ENCODE measurements at regions of chr12 and their contacts with region 1.

Region 1: DNA sequence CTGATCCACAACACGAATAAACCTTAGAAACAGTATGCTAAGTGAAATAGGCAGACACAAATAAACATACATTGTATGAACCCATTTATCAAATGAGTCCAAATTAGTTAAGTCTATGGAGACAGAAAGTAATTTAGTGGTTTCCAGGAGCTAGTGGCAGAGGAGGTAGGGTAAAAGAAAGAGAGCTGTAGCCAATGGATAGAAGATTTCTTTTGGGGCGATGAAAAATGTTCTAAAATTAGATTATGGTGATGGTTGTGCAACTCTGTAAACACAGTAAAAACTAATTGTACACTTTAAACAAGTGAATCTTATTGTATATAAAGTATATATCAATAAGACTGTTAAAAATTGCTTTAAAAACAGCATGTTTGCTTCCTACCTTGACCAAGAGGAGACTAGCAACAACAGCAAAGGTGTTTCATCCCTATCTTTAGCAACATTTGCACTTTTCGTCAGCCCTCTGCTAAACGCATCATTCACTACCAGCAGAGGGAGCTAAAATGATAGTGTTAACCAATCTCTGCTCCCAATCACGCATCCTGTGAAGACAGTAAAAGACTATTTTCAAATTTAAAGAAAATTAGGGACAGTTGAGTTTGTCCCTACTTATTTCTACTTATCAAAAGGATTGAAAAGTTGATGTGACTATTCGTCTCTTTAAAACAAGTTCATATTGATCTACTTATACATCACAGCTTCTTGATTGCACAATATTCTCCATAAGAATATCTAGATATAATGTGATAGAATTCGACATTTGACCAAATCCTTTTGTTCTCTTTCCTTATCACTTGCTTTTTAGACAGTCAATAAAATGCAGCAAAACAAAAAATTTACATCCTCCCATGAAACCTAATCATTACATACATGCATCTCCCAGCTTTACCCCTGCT is 24.0 kb upstream of the LGR5 start:
- DNase-seq: peak; percentile 60
- ATAC-seq: peak; percentile 90
- H3K4me3 ChIP-seq: no peak overlapping the region
- H3K27ac ChIP-seq: no peak overlapping the region
- H3K4me1 ChIP-seq: no peaks in the 10 kb centered on the region
- H3K27me3 ChIP-seq: no peaks in the 10 kb centered on the region
- CTCF ChIP-seq: peak; percentile 87
- EP300 ChIP-seq: no peak
- POLR2A ChIP-seq: no peak
- RAD21 ChIP-seq: peak; percentile 68

Region 2: DNA sequence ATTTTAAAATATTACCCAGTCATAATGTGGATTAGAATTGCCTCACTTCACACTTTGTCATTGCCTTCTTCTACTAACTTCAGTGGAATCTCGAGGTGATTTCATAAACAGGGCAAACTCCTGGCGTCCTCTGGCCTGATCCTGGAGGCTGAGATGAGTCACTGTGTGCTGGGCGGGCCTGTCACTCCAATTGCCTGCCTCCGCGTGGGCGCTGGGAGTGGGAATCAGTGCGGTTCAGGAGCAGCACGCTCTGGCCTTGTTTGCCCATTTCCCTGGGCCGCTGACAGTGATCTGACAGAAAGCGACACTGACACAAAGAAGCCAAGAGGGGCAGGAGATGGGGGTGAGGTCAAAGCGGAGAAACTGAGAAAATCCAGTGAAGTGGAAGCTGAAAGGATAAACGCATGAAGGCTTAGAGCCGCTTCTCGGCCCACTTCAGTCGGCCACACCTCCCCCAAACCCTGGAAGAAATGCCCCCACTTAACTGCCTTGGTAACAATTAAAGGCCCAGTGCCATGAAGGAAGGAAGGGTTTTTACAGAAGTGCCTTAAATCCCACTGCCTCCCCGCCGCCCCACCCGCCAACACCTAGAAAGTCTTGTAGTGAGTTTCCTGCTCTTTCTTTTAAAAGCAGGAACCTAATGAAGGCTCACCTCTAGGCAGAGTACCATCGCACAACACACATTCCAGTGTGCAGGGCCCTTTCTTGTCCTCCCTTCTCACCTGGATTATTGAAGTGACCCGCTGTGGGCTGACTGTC is 53.9 kb after region 1 on chr12:
- CTCF ChIA-PET with region 1: no interaction called
- POLR2A ChIA-PET with region 1: no interaction called
- in situ Hi-C with region 1: no loop called
- intact Hi-C with region 1: no loop called
- DNase-seq: peak; percentile 55
- ATAC-seq: peak; percentile 76
- H3K4me3 ChIP-seq: no peak overlapping the region
- H3K27ac ChIP-seq: no peak overlapping the region
- H3K4me1 ChIP-seq: peaks cover 49% of the 10 kb centered on the region
- H3K27me3 ChIP-seq: no peaks in the 10 kb centered on the region
- CTCF ChIP-seq: no peak
- EP300 ChIP-seq: no peak
- POLR2A ChIP-seq: no peak
- RAD21 ChIP-seq: no peak

Region 3: DNA sequence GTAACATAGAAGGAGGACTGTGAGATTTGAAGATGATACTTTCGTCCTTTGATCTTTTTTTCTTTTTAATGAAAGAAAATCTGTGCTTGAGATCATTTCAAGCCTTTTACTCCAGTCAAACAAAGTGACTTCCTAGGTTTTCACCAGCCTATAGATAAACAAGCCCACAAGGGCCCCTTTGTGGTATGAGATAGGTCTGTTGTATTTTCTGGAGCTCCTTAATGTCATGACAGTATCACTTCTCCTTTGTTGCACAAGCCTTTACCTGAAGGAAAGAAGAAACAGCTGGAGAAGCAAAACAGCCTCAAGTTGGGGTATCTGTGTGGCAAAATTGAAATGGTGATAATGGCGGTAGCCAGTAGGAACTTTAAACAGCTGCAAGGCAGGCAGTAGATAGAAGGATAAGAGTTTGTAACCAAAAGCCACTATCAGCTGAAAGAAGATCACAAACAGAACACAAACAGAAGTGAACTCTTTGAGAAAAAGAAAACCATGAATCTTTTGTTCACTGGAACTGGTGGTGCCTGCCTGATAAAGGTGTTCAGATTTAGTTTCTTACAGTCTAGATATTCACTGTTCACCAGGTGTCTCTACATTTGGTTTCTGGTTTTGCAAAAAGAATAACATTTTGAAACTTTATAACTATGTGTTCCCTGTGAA is 120.8 kb after region 1 on chr12:
- CTCF ChIA-PET with region 1: no interaction called
- POLR2A ChIA-PET with region 1: no interaction called
- in situ Hi-C with region 1: no loop called
- intact Hi-C with region 1: loop called (anchors 5 kb)
- DNase-seq: peak; percentile 76
- ATAC-seq: peak; percentile 71
- H3K4me3 ChIP-seq: peak overlapping the region in 1 of 3 experiments; percentile 7; a peak in 1 of 6 replicates
- H3K27ac ChIP-seq: peak overlapping the region; percentile 74
- H3K4me1 ChIP-seq: peaks cover 50% of the 10 kb centered on the region
- H3K27me3 ChIP-seq: no peaks in the 10 kb centered on the region
- CTCF ChIP-seq: no peak
- EP300 ChIP-seq: peak in 1 of 2 experiments; percentile 43; a peak in 2 of 4 replicates
- POLR2A ChIP-seq: no peak
- RAD21 ChIP-seq: no peak

Region 4: DNA sequence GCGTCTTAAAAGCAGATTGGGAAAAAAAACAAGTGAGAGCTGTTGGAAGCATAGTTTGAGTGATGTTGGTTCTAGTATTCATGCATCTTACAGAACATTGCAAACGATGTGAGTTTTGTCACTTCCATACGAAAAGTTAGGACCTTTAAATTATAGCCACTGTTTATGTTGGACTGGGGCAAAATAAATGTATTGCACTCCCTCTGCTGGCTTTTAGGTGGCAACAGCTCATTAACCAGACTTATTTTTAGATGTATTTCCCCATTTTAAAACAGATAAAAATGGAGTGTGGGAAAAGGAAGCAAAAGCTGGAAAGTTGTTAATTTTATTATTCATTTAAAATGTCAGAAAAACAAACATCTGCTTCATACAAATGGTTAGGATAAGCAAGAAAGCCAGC is 135.9 kb after region 1 on chr12:
- CTCF ChIA-PET with region 1: interaction called, 8 read pairs
- POLR2A ChIA-PET with region 1: no interaction called
- in situ Hi-C with region 1: no loop called
- intact Hi-C with region 1: loop called (anchors 5 kb)
- DNase-seq: no peak
- ATAC-seq: no peak
- H3K4me3 ChIP-seq: no peak overlapping the region
- H3K27ac ChIP-seq: no peak overlapping the region
- H3K4me1 ChIP-seq: peaks cover 48% of the 10 kb centered on the region
- H3K27me3 ChIP-seq: no peaks in the 10 kb centered on the region
- CTCF ChIP-seq: peak; percentile 34
- EP300 ChIP-seq: no peak
- POLR2A ChIP-seq: no peak
- RAD21 ChIP-seq: no peak

Region 5: GRCh38 chr12:71636704-71637115 is 221.1 kb after region 1 on chr12:
- CTCF ChIA-PET with region 1: interaction called, 3 read pairs
- POLR2A ChIA-PET with region 1: no interaction called
- in situ Hi-C with region 1: no loop called
- intact Hi-C with region 1: loop called (anchors 1 kb)
- DNase-seq: peak; percentile 70
- ATAC-seq: peak; percentile 51
- H3K4me3 ChIP-seq: no peak overlapping the region
- H3K27ac ChIP-seq: no peak overlapping the region
- H3K4me1 ChIP-seq: no peaks in the 10 kb centered on the region
- H3K27me3 ChIP-seq: no peaks in the 10 kb centered on the region
- CTCF ChIP-seq: peak; percentile 70
- EP300 ChIP-seq: no peak
- POLR2A ChIP-seq: no peak
- RAD21 ChIP-seq: peak; percentile 29; the same call in 1 of the 2 replicates

Region 6: DNA sequence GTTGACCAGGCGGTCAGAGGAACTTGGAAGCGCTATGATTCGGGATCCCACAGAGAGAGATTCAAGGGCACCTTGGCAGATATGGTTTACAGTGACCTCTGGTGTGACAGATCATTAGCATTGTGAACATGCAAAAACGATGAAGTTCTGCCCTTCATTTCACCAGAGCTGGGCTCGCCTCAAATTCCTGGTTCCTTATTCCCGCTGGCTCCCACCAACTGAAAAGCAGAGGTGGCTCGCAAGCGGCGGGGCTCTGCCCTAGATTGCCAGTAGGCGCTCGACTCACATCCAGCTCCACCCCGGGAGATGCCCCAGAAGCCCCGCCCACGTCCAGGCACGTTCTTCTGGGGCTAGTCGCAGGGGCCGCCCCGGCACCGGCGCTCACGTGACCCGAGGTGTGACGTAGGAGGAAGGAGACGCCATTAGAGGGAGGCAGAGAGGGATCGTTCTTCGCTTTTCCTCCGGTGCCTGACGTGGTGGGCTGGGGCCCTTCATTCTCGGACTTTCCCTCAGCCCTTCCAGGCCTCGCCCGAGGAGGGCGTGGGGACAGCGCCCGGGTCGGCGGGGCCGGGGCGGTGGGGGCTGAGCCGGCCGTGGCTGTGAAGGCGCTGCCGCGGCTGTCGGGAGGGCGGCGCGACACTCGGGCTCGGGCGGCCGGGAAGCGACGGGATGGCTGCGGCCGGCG is 339.0 kb after region 1 on chr12 and contains the start of gene RAB21:
- CTCF ChIA-PET with region 1: no interaction called
- POLR2A ChIA-PET with region 1: no interaction called
- in situ Hi-C with region 1: loop called (anchors 10 kb)
- intact Hi-C with region 1: no loop called
- DNase-seq: peak; percentile 94
- ATAC-seq: peak; percentile 99
- H3K4me3 ChIP-seq: peak within 1 kb of the TSS; percentile 92 to 99 (median 97)
- H3K27ac ChIP-seq: peak within 1 kb of the TSS; percentile 83
- H3K4me1 ChIP-seq: peaks cover 40% of the 10 kb centered on the region
- H3K27me3 ChIP-seq: no peaks in the 10 kb centered on the region; a peak in 2 of 5 replicates
- CTCF ChIP-seq: peak; percentile 32
- EP300 ChIP-seq: 0 out of 4 replicates have a peak, but pooled peaks of 1 of the 2 experiments have one; percentile 7
- POLR2A ChIP-seq: peak; percentile 87 to 94
- RAD21 ChIP-seq: no peak; the same call in 1 of the 2 replicates
- total RNA-seq, gene RAB21: 50.9 and 61.4 TPM in 2 replicates